Prostate gland (tissue), 2 donors: ENCODE measurements at regions of chr5 and their contacts with region 1.

Region 1: GRCh38 chr5:144203750-144204596 is 33.3 kb downstream of the KCTD16 start:
- DNase-seq: peak; percentile 30
- H3K4me3 ChIP-seq: no peak overlapping the region
- H3K27ac ChIP-seq: no peak overlapping the region
- H3K4me1 ChIP-seq: no peaks in the 10 kb centered on the region
- H3K27me3 ChIP-seq: no peaks in the 10 kb centered on the region
- CTCF ChIP-seq: peak; percentile 41 to 90 (median 78)
- POLR2A ChIP-seq: no peak

Region 2: GRCh38 chr5:144048259-144048856 is 155.6 kb before region 1 on chr5:
- intact Hi-C with region 1: no loop called
- DNase-seq: no peak
- H3K4me3 ChIP-seq: no peak overlapping the region
- H3K27ac ChIP-seq: no peak overlapping the region
- H3K4me1 ChIP-seq: no peaks in the 10 kb centered on the region
- H3K27me3 ChIP-seq: peaks cover 6% of the 10 kb centered on the region
- CTCF ChIP-seq: no peak
- POLR2A ChIP-seq: no peak

Region 3: GRCh38 chr5:146049014-146049703 is 1845.2 kb after region 1 on chr5:
- intact Hi-C with region 1: loop called (anchors 5 kb)
- DNase-seq: peak; percentile 57
- H3K4me3 ChIP-seq: no peak overlapping the region
- H3K27ac ChIP-seq: no peak overlapping the region
- H3K4me1 ChIP-seq: peaks cover 4% of the 10 kb centered on the region
- H3K27me3 ChIP-seq: no peaks in the 10 kb centered on the region
- CTCF ChIP-seq: peak in 3 of 4 experiments; percentile 64 to 74 (median 72)
- POLR2A ChIP-seq: no peak

Region 4: GRCh38 chr5:146130440-146131045 is 1926.6 kb after region 1 on chr5:
- intact Hi-C with region 1: loop called (anchors 10 kb)
- DNase-seq: no peak
- H3K4me3 ChIP-seq: no peak overlapping the region
- H3K27ac ChIP-seq: no peak overlapping the region
- H3K4me1 ChIP-seq: no peaks in the 10 kb centered on the region
- H3K27me3 ChIP-seq: no peaks in the 10 kb centered on the region
- CTCF ChIP-seq: peak in 3 of 4 experiments; percentile 33 to 58 (median 57)
- POLR2A ChIP-seq: no peak